PC-3 (cell line): ENCODE measurements at regions of chr9 and their contacts with region 1.

Region 1: GRCh38 chr9:106717686-106718085 is 145.3 kb upstream of the ZNF462 start:
- DNase-seq: peak; percentile 78
- ATAC-seq: peak; percentile 79
- H3K4me3 ChIP-seq: peak overlapping the region; percentile 24; the same call in 1 of the 2 replicates
- H3K27ac ChIP-seq: peak overlapping the region; percentile 63
- H3K4me1 ChIP-seq: peaks cover 31% of the 10 kb centered on the region
- H3K27me3 ChIP-seq: no peaks in the 10 kb centered on the region
- CTCF ChIP-seq: peak; percentile 28; the same call in 1 of the 2 replicates

Region 2: GRCh38 chr9:106613250-106613737 is 104.4 kb before region 1 on chr9:
- CTCF ChIA-PET with region 1: no interaction called
- POLR2A ChIA-PET with region 1: no interaction called
- intact Hi-C with region 1: no loop called
- DNase-seq: no peak
- ATAC-seq: peak; percentile 31; the same call in 1 of the 2 replicates
- H3K4me3 ChIP-seq: no peak overlapping the region
- H3K27ac ChIP-seq: no peak overlapping the region
- H3K4me1 ChIP-seq: no peaks in the 10 kb centered on the region
- H3K27me3 ChIP-seq: no peaks in the 10 kb centered on the region
- CTCF ChIP-seq: no peak

Region 3: GRCh38 chr9:106697750-106698502 is 19.8 kb before region 1 on chr9:
- CTCF ChIA-PET with region 1: no interaction called
- POLR2A ChIA-PET with region 1: no interaction called
- intact Hi-C with region 1: no loop called
- DNase-seq: no peak
- ATAC-seq: no peak
- H3K4me3 ChIP-seq: no peak overlapping the region
- H3K27ac ChIP-seq: no peak overlapping the region
- H3K4me1 ChIP-seq: peaks cover 19% of the 10 kb centered on the region
- H3K27me3 ChIP-seq: no peaks in the 10 kb centered on the region
- CTCF ChIP-seq: no peak

Region 4: DNA sequence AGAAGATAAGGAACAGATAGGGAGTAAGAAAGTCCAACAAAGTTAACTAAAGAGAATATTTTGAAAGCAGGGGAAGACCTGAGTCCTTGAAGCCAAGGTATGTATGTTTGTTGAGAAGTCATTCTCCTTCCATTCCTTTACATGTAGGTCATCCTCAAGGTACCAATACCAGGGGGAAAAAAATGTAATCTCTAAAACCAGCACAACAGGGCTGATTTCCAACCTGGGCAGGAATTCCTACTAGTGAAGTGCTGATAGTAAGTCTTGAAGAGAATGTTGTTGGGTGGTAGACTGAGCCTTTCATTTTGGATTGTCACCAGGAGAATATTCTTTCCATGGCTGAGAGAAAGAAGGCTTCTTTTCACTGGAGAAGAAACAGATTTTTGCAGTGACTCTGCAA is 28.2 kb after region 1 on chr9:
- CTCF ChIA-PET with region 1: no interaction called
- POLR2A ChIA-PET with region 1: no interaction called
- intact Hi-C with region 1: loop called (anchors 2 kb)
- DNase-seq: peak; percentile 20
- ATAC-seq: no peak; the same call in 1 of the 2 replicates
- H3K4me3 ChIP-seq: no peak overlapping the region
- H3K27ac ChIP-seq: no peak overlapping the region
- H3K4me1 ChIP-seq: peaks cover 13% of the 10 kb centered on the region
- H3K27me3 ChIP-seq: no peaks in the 10 kb centered on the region
- CTCF ChIP-seq: no peak

Region 5: GRCh38 chr9:106834888-106835287 is 117.2 kb after region 1 on chr9:
- CTCF ChIA-PET with region 1: no interaction called
- POLR2A ChIA-PET with region 1: no interaction called
- intact Hi-C with region 1: no loop called
- DNase-seq: no peak
- ATAC-seq: no peak
- H3K4me3 ChIP-seq: no peak overlapping the region
- H3K27ac ChIP-seq: no peak overlapping the region
- H3K4me1 ChIP-seq: no peaks in the 10 kb centered on the region
- H3K27me3 ChIP-seq: no peaks in the 10 kb centered on the region
- CTCF ChIP-seq: no peak

Region 6: DNA sequence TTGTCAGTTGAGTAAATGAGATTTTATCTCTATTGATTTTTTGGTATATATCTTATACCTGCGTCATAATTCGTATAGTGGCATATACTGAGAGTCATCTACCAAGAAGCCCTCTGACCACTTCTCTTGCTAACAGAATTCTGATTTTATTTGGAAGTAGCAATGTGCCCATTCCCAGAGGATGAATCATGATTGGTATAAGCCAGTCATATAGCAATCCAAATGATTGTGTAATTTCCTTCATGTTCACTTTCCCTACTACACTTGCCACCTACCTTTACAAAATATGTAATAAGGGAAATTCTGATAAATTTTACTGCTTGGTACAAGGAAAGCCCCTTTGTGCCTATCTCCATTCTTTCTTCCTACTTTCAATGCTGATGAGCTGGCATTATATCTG is 129.2 kb after region 1 on chr9:
- CTCF ChIA-PET with region 1: no interaction called
- POLR2A ChIA-PET with region 1: no interaction called
- intact Hi-C with region 1: loop called (anchors 5 kb)
- DNase-seq: peak; percentile 92
- ATAC-seq: peak; percentile 86
- H3K4me3 ChIP-seq: no peak overlapping the region
- H3K27ac ChIP-seq: peak overlapping the region; percentile 85
- H3K4me1 ChIP-seq: peaks cover 36% of the 10 kb centered on the region
- H3K27me3 ChIP-seq: no peaks in the 10 kb centered on the region
- CTCF ChIP-seq: no peak